ENCODE measurements at regions of chr3 and their contacts with region 1.

Region 1: DNA sequence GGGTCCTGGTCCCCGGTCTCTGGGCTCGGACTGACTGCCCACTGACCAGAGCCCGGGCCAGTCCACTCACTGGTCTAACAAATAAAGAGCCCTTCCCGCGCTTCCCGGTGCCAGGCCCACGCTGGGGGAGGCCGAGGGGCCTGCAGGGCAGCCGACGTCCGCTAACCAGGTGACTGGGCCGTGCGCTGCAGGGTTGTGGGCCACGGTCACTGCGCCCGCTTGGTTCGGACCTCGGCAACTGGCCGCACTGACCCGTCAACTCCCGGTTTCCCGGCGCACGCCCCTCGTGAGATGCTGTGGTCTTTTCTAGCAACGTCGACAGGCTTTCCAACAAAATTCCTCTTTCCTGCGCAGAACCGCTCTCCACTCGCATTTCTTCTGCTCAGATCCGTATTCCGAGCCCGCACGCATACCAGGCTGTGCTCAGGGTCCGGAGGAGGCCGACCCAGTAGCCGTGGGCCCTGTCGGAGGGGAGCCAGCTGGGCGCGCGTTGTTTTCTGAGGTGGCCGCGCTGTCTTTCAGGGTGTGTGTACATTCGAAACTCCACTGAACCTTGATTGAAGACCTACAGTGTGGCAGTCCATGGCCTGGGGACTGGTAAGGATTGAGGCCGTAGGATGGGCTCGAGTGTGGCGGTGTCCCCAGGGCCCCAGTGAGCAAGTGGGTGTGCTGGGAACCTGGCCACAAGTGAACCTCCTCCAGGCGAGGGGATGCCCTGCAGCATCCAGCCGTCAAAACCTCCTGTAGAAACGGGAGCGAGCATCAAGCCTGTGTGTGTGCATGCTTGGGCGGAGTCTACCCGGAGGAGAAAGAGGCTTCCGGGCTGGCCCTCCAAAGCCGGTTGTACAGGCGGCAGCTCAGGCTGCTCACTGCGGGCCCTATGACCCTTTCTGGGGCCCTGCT is 875 bp upstream of the NT5DC2 start:
- DNase-seq: peak; percentile 85

Region 2: DNA sequence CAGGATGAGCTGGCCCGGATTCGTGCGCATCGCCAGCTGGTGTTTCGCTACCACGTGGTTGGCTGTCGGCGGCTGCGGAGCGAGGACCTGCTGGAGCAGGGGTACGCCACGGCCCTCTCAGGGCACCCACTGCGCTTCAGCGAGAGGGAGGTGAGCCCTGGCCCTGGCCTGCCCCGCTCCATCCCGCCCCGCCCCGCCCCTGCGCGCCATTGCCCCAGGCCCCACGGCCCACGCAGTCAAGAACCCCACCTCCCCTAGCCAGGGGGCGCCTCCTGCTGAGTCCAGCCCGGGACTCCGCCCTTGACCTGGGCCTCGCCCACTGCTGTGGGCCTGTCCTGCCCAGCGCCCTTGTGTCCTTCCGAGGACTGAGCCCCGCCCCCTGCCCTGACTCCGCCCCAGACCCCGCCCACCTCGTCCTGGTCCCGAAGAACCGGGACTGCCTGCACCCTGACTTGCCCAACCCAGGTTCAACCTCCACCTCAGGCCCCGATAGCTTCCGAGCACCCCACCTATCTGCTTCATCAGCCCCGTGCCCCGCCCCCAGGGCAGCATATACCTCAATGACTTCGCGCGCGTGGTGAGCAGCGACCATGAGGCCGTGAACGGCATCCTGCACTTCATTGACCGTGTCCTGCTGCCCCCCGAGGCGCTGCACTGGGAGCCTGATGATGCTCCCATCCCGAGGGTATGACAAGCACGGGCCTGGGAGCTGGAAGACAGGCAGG is 15.7 kb before region 1 on chr3:
- intact Hi-C with region 1: no loop called
- DNase-seq: no peak

Region 3: DNA sequence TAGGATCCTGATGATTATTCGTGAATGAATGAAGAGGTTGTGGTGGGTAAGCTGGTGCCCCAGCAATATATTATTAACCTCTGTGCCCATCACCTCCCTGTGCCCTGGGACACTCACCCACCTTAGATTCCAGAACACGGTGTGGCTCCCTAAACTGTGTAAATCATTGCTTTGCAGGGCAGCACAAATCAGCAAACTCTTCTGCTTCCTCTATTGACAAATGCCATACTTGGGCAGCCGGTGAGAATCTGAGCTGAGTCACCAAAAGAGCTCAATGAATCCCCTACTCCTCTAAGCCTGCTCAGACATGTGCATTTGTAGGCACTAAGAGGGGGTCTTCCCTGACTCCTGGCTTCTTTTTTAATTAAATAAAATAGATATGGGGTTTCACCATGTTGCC is 17.6 kb after region 1 on chr3:
- intact Hi-C with region 1: loop called in 1 of 2 experiments (anchors 1 kb)
- DNase-seq: no peak